Naive thymus-derived CD4-positive, alpha-beta T cell (primary cell): ENCODE measurements at regions of chr2 and their contacts with region 1.

Region 1: GRCh38 chr2:135052042-135052876 is at the start of gene RAB3GAP1:
- DNase-seq: peak; percentile 76 to 96 (median 94)
- ATAC-seq: peak; percentile 93
- H3K4me3 ChIP-seq: peak within 1 kb of the TSS; percentile 69
- H3K4me3 Mint-ChIP-seq: peak within 1 kb of the TSS; percentile 94 to 99 (median 97)
- H3K27ac ChIP-seq: peak within 1 kb of the TSS; percentile 99
- H3K27ac Mint-ChIP-seq: peak within 1 kb of the TSS; percentile 98 to 100 (median 99)
- H3K4me1 ChIP-seq: peaks cover 0 to 22% of the 10 kb centered on the region in 2 donors
- H3K4me1 Mint-ChIP-seq: peaks cover 24 to 52% (median 48%) of the 10 kb centered on the region in 7 donors
- H3K27me3 ChIP-seq: no peaks in the 10 kb centered on the region
- H3K27me3 Mint-ChIP-seq: peaks cover 0 to 6% (median 0%) of the 10 kb centered on the region in 5 donors
- total RNA-seq, gene RAB3GAP1: 24.3 to 58.7 (median 42.9) TPM

Region 2: GRCh38 chr2:134668821-134669220 is 383.4 kb before region 1 on chr2:
- CTCF ChIA-PET with region 1: no interaction called
- POLR2A ChIA-PET with region 1: no interaction called
- intact Hi-C with region 1: loop called (anchors 1 to 5 kb)
- DNase-seq: peak; percentile 53 to 92 (median 88)
- ATAC-seq: peak; percentile 85
- H3K4me3 ChIP-seq: peak overlapping the region; percentile 4
- H3K4me3 Mint-ChIP-seq: peak overlapping the region; percentile 62 to 82 (median 68)
- H3K27ac ChIP-seq: no peak overlapping the region
- H3K27ac Mint-ChIP-seq: peak overlapping the region; percentile 74 to 96 (median 89)
- H3K4me1 ChIP-seq: peaks cover 54 to 61% of the 10 kb centered on the region in 2 donors
- H3K4me1 Mint-ChIP-seq: peaks cover 60 to 87% (median 72%) of the 10 kb centered on the region in 7 donors
- H3K27me3 ChIP-seq: no peaks in the 10 kb centered on the region
- H3K27me3 Mint-ChIP-seq: peaks cover 0 to 37% (median 4%) of the 10 kb centered on the region in 5 donors

Region 3: DNA sequence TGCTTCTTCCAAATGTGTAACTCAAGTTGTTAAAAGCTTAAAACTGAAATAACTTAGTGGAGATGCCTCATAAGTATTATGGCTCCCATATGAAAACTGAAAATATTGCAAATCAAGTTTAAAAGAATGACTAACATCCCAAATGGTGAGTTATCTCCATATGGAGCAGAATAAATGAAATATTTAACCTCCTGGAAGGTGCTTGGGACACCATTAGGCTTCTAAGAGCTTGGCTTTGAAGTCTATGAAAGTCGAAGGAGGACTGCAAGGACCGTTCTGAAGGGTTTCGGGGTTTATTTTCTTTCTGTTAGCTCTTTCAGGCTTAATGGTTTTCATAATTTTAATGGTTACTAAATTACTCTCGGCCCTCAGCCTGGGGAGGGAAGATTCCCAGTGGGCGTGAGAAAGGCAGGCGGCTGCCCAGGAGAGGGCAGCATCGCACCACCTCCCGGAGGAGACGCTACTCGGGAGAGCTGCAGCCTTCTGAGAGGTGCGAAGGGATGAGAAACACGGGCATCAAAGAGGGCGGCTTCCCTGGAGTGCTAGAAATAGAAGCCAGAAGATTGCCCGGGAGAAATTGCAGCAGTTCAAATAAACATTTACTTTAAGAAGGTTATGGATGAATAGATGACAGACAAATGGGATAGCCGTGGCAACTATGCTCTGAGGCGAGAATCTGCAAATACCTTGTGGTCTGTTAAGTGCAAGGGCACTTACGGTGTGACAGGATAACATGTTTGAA is 48.1 kb before region 1 on chr2:
- CTCF ChIA-PET with region 1: interaction called, 4 read pairs
- POLR2A ChIA-PET with region 1: no interaction called
- intact Hi-C with region 1: loop called in 1 of 2 experiments (anchors 2 kb)
- DNase-seq: peak; percentile 32 to 76 (median 62)
- ATAC-seq: peak; percentile 92
- H3K4me3 ChIP-seq: no peak overlapping the region
- H3K4me3 Mint-ChIP-seq: peak overlapping the region in 3 of 10 donors; percentile 17 to 63 (median 21)
- H3K27ac ChIP-seq: no peak overlapping the region
- H3K27ac Mint-ChIP-seq: no peak overlapping the region
- H3K4me1 ChIP-seq: no peaks in the 10 kb centered on the region
- H3K4me1 Mint-ChIP-seq: peaks cover 0 to 8% (median 5%) of the 10 kb centered on the region in 7 donors
- H3K27me3 ChIP-seq: no peaks in the 10 kb centered on the region
- H3K27me3 Mint-ChIP-seq: peaks cover 6 to 22% (median 13%) of the 10 kb centered on the region in 5 donors

Region 4: DNA sequence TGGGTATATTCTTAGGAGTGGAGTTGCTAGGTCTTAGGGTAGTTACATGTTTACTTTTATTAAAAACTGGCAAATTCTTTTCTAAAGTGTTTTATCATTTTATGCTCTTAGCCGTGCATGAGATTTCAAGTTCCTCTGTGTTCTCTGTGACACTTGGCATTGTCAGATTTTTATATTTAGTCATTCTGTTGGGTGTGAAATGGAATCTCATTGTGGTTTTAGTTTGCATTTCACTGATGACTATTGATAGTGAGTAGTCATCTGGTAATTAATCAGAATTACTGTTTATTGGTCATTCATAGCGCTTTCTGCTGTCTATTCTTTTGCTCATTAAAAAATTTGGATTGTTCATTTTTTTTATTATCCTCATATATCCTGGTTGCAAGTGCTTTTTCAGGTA is 34.0 kb after region 1 on chr2:
- CTCF ChIA-PET with region 1: no interaction called
- POLR2A ChIA-PET with region 1: interaction called, 4 read pairs
- intact Hi-C with region 1: loop called in 1 of 2 experiments (anchors 5 kb)
- DNase-seq: no peak
- ATAC-seq: no peak
- H3K4me3 ChIP-seq: no peak overlapping the region
- H3K4me3 Mint-ChIP-seq: no peak overlapping the region
- H3K27ac ChIP-seq: no peak overlapping the region
- H3K27ac Mint-ChIP-seq: no peak overlapping the region
- H3K4me1 ChIP-seq: no peaks in the 10 kb centered on the region
- H3K4me1 Mint-ChIP-seq: peaks cover 5 to 48% (median 30%) of the 10 kb centered on the region in 7 donors
- H3K27me3 ChIP-seq: no peaks in the 10 kb centered on the region
- H3K27me3 Mint-ChIP-seq: no peaks in the 10 kb centered on the region

Region 5: GRCh38 chr2:135531231-135532228 is 479.3 kb after region 1 on chr2 and contains the start of gene R3HDM1:
- CTCF ChIA-PET with region 1: no interaction called
- POLR2A ChIA-PET with region 1: interaction called, 5 read pairs
- intact Hi-C with region 1: loop called (anchors 1 kb)
- DNase-seq: peak in 8 of 9 donors; percentile 71 to 99 (median 98)
- ATAC-seq: peak; percentile 89
- H3K4me3 ChIP-seq: peak within 1 kb of the TSS; percentile 83
- H3K4me3 Mint-ChIP-seq: no peak within 1 kb of the TSS
- H3K27ac ChIP-seq: peak within 1 kb of the TSS; percentile 84
- H3K27ac Mint-ChIP-seq: peak within 1 kb of the TSS in 7 of 9 donors; percentile 36 to 81 (median 67)
- H3K4me1 ChIP-seq: peaks cover 4 to 21% of the 10 kb centered on the region in 2 donors
- H3K4me1 Mint-ChIP-seq: peaks cover 10 to 39% (median 34%) of the 10 kb centered on the region in 7 donors
- H3K27me3 ChIP-seq: no peaks in the 10 kb centered on the region
- H3K27me3 Mint-ChIP-seq: no peaks in the 10 kb centered on the region
- total RNA-seq, gene R3HDM1: 35.0 to 58.2 (median 47.0) TPM

Region 6: GRCh38 chr2:135741395-135742324 is 689.4 kb after region 1 on chr2 and contains the start of gene UBXN4:
- CTCF ChIA-PET with region 1: interaction called, 3 read pairs
- POLR2A ChIA-PET with region 1: interaction called, 4 read pairs
- intact Hi-C with region 1: loop called (anchors 1 kb)
- DNase-seq: peak; percentile 73 to 93 (median 88)
- ATAC-seq: peak; percentile 95
- H3K4me3 ChIP-seq: peak within 1 kb of the TSS; percentile 88
- H3K4me3 Mint-ChIP-seq: peak within 1 kb of the TSS; percentile 92 to 98 (median 95)
- H3K27ac ChIP-seq: peak within 1 kb of the TSS; percentile 97
- H3K27ac Mint-ChIP-seq: peak within 1 kb of the TSS; percentile 89 to 99 (median 95)
- H3K4me1 ChIP-seq: peaks cover 20 to 22% of the 10 kb centered on the region in 2 donors
- H3K4me1 Mint-ChIP-seq: peaks cover 24 to 47% (median 43%) of the 10 kb centered on the region in 7 donors
- H3K27me3 ChIP-seq: no peaks in the 10 kb centered on the region
- H3K27me3 Mint-ChIP-seq: no peaks in the 10 kb centered on the region
- total RNA-seq, gene UBXN4: 115 to 158 (median 145) TPM